Common myeloid progenitor, CD34-positive (primary cell): ENCODE measurements at regions of chr17 and their contacts with region 1.

Region 1: GRCh38 chr17:43006639-43007551 is at the start of gene IFI35:
- DNase-seq: peak; percentile 84 to 92 (median 90)
- H3K4me3 ChIP-seq: peak within 1 kb of the TSS; percentile 81 to 95 (median 89)
- H3K27ac ChIP-seq: peak within 1 kb of the TSS; percentile 79 to 87
- H3K4me1 ChIP-seq: peaks cover 0 to 14% (median 9%) of the 10 kb centered on the region in 4 experiments
- H3K27me3 ChIP-seq: no peaks in the 10 kb centered on the region

Region 2: DNA sequence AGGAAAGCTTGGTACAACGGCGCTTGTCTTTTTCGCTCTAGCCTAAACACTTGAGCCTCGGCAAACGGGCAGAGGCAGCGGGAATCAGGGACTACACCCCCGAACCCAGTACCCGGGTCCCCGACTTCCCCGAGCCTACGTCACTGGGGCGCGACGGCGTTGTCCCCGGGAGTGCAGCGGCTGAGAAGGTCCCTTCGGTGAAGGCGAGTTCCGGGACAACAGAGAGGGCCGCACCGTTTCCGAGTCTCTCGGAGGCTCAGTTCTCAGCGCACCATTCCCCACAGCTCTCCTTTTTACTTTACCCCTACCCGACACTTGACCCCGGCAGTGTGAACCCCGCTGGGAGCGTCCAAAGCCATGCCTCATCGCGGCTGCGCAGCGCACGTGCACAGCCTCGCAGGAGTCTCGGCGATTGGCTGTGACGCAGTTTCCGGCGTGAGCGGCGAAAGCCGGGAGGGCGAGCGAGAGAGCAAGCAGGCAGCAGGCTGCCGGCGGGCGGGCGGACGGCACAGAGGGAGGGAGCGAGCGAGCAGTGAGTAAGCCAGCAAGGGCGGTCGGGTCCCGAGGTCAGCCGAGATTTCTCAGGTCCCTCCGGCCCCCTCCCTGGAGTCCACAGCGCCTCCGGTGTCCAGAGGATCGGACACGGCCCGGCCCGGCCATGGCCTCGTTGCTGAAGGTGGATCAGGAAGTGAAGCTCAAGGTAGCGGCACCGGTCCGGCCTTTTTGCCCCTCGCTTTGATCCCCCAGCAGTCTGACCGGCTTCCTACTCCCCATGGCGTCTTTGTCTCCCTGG is 173.7 kb before region 1 on chr17 and contains the start of gene PSME3:
- CTCF ChIA-PET with region 1: no interaction called
- POLR2A ChIA-PET with region 1: no interaction called
- DNase-seq: peak; percentile 90 to 94 (median 90)
- H3K4me3 ChIP-seq: peak within 1 kb of the TSS; percentile 83 to 98 (median 85)
- H3K27ac ChIP-seq: peak within 1 kb of the TSS; percentile 90 to 92
- H3K4me1 ChIP-seq: peaks cover 13 to 21% (median 17%) of the 10 kb centered on the region in 4 experiments
- H3K27me3 ChIP-seq: no peaks in the 10 kb centered on the region

Region 3: DNA sequence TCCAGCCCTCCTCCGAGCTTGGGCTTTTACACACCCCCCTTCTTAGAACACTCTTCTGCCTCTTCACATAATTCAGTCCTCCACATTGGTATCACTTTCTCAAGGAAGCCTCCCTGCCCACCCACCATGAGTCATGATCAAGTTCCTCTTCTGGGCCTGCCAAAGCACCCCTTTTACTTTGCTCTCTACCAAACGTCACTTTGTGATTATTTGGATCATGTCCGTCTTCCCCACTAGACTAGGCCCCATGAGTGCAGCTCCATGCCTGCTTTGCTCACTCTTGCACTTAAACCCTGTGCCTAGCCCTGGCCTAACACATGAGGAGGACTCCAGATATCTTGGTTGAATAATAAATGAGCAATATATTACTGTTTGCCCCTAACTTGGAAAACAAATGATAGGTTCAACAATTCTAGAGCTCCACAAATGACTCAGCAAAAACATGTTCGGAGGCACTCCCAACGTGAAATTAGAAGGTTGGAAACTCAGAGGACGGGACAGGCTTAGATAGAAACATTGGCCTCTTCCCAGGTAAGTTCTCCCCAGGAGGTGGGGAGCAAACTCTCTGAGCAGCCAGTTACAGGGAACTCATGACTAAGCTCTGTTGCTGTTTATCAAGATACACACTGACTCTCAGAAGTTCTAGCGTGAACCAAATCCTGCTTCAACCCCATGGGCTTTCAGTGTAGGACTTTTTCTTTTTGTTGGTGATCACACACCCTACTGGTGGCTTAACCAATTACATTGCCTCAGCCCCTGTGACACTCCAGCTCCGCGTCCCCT is 78.0 kb before region 1 on chr17:
- CTCF ChIA-PET with region 1: no interaction called
- POLR2A ChIA-PET with region 1: no interaction called
- DNase-seq: peak; percentile 94 to 98 (median 97)
- H3K4me3 ChIP-seq: peak overlapping the region in 5 of 7 experiments; percentile 0 to 56 (median 21)
- H3K27ac ChIP-seq: peak overlapping the region; percentile 82 to 94
- H3K4me1 ChIP-seq: peaks cover 6 to 26% (median 18%) of the 10 kb centered on the region in 4 experiments
- H3K27me3 ChIP-seq: no peaks in the 10 kb centered on the region

Region 4: DNA sequence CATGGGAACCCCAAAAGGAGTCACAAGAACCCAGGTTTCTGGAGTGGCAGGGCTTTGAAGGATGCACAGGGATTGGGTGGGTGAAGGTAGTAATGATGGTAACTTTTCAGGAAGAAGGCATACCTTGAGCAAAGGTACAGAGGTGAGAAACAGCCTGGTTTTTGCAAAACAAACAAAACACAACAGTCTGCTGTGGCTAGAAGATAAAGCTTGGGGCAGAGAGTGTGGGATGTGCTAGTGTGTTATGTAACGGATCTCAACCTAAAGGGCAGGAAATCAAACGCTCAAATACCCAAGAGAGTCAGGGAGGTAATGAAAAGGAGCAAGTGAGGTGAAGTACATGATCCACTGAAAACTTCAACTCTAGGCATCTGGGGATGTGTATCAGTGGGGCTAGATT is 31.6 kb before region 1 on chr17:
- CTCF ChIA-PET with region 1: no interaction called
- POLR2A ChIA-PET with region 1: no interaction called
- DNase-seq: peak in 1 of 3 donors; percentile 48
- H3K4me3 ChIP-seq: no peak overlapping the region
- H3K27ac ChIP-seq: no peak overlapping the region
- H3K4me1 ChIP-seq: peaks cover 0 to 11% (median 10%) of the 10 kb centered on the region in 4 experiments
- H3K27me3 ChIP-seq: no peaks in the 10 kb centered on the region

Region 5: DNA sequence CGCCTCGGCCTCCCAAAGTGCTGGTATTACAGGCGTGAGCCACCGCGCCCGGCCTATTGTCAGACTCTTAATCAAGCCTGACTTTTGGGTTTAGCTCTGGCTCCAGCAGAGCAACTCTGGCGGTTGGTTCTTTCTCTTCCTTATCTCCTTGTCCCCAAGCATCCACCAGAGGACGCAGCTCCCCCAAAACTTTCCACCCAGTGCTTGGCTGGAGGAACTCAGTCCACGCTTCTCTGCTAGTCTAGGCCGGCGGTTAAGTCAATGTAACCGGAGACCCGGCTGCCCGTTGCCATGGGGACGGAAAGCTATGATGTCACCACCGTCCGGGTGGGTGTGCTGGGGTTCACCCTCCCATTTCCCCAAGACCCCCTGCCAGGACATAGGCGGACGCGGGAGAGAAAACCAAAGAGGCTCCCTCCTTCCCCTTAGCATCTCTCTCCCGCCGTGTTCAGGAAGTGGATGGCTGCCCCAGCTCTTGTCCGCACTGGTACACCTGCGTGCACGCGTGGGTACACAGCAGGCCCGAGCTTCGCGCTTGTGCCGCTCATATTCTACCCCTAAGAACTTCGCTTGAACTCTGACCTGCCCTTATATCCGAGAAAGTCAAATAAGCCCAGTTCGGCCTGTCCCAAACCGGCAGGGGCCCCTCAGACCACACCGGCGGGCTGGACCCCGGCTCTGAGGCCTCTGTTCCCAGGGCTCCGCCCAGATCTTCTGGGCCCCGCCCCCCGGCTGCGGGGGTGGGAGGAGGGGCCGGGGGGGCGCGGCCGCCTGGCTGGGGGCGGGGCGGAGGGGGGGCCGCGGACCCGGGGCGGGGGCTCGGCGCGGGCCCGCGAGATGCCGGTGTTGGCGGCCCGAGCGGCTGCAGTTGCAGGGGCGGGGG is 17.8 kb after region 1 on chr17 and contains the start of gene RND2:
- CTCF ChIA-PET with region 1: interaction called, 10 read pairs
- POLR2A ChIA-PET with region 1: interaction called, 3 read pairs
- DNase-seq: peak; percentile 93 to 97 (median 97)
- H3K4me3 ChIP-seq: peak within 1 kb of the TSS; percentile 37 to 88 (median 73)
- H3K27ac ChIP-seq: peak within 1 kb of the TSS in 1 of 2 experiments; percentile 70
- H3K4me1 ChIP-seq: peaks cover 3 to 41% (median 32%) of the 10 kb centered on the region in 4 experiments
- H3K27me3 ChIP-seq: peaks cover 0 to 3% (median 0%) of the 10 kb centered on the region in 5 experiments